WTC11 (cell line): ENCODE measurements at regions of chr4 and their contacts with region 1.

Region 1: GRCh38 chr4:92387459-92388069 is 83.8 kb downstream of the GRID2 start:
- DNase-seq: no peak
- ATAC-seq: peak; percentile 85
- H3K4me3 Mint-ChIP-seq: no peak overlapping the region
- H3K27ac Mint-ChIP-seq: 0 out of 2 replicates have a peak overlapping the region, but pooled peaks have one; percentile 64
- H3K4me1 Mint-ChIP-seq: peaks cover 61% of the 10 kb centered on the region
- H3K27me3 Mint-ChIP-seq: no peaks in the 10 kb centered on the region
- CTCF ChIP-seq: peak; percentile 52; the same call in 1 of the 2 replicates

Region 2: GRCh38 chr4:92368653-92369052 is 18.9 kb before region 1 on chr4:
- CTCF ChIA-PET with region 1: interaction called, 13 read pairs
- POLR2A ChIA-PET with region 1: no interaction called
- DNase-seq: no peak
- ATAC-seq: no peak
- H3K4me3 Mint-ChIP-seq: no peak overlapping the region
- H3K27ac Mint-ChIP-seq: no peak overlapping the region
- H3K4me1 Mint-ChIP-seq: peaks cover 49% of the 10 kb centered on the region
- H3K27me3 Mint-ChIP-seq: no peaks in the 10 kb centered on the region
- CTCF ChIP-seq: no peak

Region 3: DNA sequence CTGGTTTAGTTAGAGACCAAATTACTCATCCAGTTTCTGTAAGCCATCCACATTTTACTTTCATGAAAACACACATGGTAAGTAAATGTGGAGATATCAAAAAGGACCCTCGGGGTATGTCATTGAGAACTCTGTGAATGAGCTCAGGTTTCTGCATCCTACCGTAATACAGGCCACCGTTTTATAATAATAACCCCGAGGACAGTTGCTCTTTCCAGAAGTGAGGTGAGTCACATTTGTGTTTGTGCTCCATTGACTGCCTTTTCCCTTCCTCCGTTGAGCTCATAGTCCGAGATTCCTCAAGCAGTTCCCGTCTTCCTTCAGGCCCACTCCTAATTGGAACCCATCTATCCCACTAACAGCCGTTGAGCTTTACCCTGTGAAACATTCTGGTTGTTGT is 11.5 kb after region 1 on chr4:
- CTCF ChIA-PET with region 1: interaction called, 13 read pairs
- POLR2A ChIA-PET with region 1: no interaction called
- DNase-seq: no peak
- ATAC-seq: peak; percentile 26; the same call in 1 of the 2 replicates
- H3K4me3 Mint-ChIP-seq: no peak overlapping the region
- H3K27ac Mint-ChIP-seq: peak overlapping the region; percentile 73
- H3K4me1 Mint-ChIP-seq: peaks cover 57% of the 10 kb centered on the region
- H3K27me3 Mint-ChIP-seq: no peaks in the 10 kb centered on the region
- CTCF ChIP-seq: no peak